ENCODE measurements at regions of chr7 and their contacts with region 1.

Region 1: DNA sequence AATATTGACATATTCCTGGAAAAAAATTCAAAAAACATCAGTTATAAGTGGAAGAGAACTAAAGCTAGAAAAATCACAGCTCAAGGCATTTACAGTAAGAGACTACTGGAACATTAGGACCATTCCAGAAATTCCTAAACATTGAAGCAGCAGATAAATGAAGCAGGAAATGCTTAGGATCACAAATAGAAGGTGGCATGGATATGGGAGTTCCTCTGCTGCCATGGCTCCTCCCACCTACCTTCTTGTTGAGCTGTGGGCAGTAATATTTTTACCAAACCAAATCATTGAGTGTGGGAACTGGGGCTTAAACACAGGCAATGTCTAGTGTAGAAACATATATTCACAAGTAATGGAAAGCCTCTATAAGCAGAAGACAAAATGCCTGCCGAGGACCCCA is 292.8 kb downstream of the ANKRD7 start:
- DNase-seq: no peak
- H3K4me3 Mint-ChIP-seq: no peak overlapping the region
- H3K27ac Mint-ChIP-seq: no peak overlapping the region
- H3K4me1 Mint-ChIP-seq: no peaks in the 10 kb centered on the region
- H3K27me3 Mint-ChIP-seq: peaks cover 41% of the 10 kb centered on the region
- CTCF ChIP-seq: no peak

Region 2: GRCh38 chr7:118449797-118450582 is 67.3 kb before region 1 on chr7:
- CTCF ChIA-PET with region 1: no interaction called
- POLR2A ChIA-PET with region 1: no interaction called
- intact Hi-C with region 1: no loop called
- DNase-seq: no peak
- H3K4me3 Mint-ChIP-seq: no peak overlapping the region
- H3K27ac Mint-ChIP-seq: no peak overlapping the region
- H3K4me1 Mint-ChIP-seq: no peaks in the 10 kb centered on the region
- H3K27me3 Mint-ChIP-seq: peaks cover 28% of the 10 kb centered on the region
- CTCF ChIP-seq: no peak

Region 3: GRCh38 chr7:118531566-118531965 is 14.3 kb after region 1 on chr7:
- CTCF ChIA-PET with region 1: no interaction called
- POLR2A ChIA-PET with region 1: no interaction called
- intact Hi-C with region 1: loop called (anchors 2 kb)
- DNase-seq: no peak
- H3K4me3 Mint-ChIP-seq: no peak overlapping the region
- H3K27ac Mint-ChIP-seq: no peak overlapping the region
- H3K4me1 Mint-ChIP-seq: no peaks in the 10 kb centered on the region
- H3K27me3 Mint-ChIP-seq: peaks cover 83% of the 10 kb centered on the region
- CTCF ChIP-seq: no peak

Region 4: GRCh38 chr7:118696879-118697278 is 179.6 kb after region 1 on chr7:
- CTCF ChIA-PET with region 1: no interaction called
- POLR2A ChIA-PET with region 1: no interaction called
- intact Hi-C with region 1: no loop called
- DNase-seq: no peak
- H3K4me3 Mint-ChIP-seq: no peak overlapping the region
- H3K27ac Mint-ChIP-seq: no peak overlapping the region
- H3K4me1 Mint-ChIP-seq: no peaks in the 10 kb centered on the region
- H3K27me3 Mint-ChIP-seq: peaks cover 87% of the 10 kb centered on the region
- CTCF ChIP-seq: no peak